SK-N-SH (cell line): ENCODE measurements at regions of chr6 and their contacts with region 1.

Region 1: GRCh38 chr6:88870717-88871330 is 92.6 kb downstream of the RNGTT start:
- DNase-seq: peak; percentile 29
- H3K4me3 ChIP-seq: no peak overlapping the region
- H3K27ac ChIP-seq: no peak overlapping the region
- H3K4me1 ChIP-seq: peaks cover 0 to 21% of the 10 kb centered on the region in 2 experiments; a peak in 2 of 4 replicates
- H3K27me3 ChIP-seq: no peaks in the 10 kb centered on the region
- CTCF ChIP-seq: peak; percentile 79
- EP300 ChIP-seq: no peak
- RAD21 ChIP-seq: peak; percentile 89

Region 2: DNA sequence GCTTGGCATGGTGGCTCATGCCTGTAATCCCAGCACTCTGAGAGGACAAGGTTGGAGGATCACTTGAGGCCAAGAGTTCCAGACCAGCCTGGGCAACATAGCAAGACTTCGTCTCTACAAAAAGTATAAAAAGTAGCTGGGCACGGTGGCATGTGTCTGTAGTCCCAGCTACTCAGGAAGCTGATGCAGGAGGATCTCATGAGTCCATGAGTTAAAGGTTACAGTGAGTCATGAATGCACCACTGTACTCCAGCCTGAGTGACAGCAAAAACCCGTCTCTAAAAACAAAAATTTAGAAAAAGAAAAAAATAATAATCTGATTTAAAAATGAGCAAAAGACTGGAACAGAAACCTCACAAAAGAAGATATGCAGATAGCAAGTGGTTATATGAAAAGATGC is 187.1 kb before region 1 on chr6:
- CTCF ChIA-PET with region 1: no interaction called
- POLR2A ChIA-PET with region 1: no interaction called
- DNase-seq: no peak
- H3K4me3 ChIP-seq: no peak overlapping the region
- H3K27ac ChIP-seq: no peak overlapping the region
- H3K4me1 ChIP-seq: no peaks in the 10 kb centered on the region
- H3K27me3 ChIP-seq: no peaks in the 10 kb centered on the region
- CTCF ChIP-seq: no peak
- EP300 ChIP-seq: no peak
- RAD21 ChIP-seq: no peak

Region 3: GRCh38 chr6:88855541-88856147 is 15.2 kb before region 1 on chr6:
- CTCF ChIA-PET with region 1: interaction called, 43 read pairs
- POLR2A ChIA-PET with region 1: no interaction called
- DNase-seq: no peak
- H3K4me3 ChIP-seq: no peak overlapping the region
- H3K27ac ChIP-seq: peak overlapping the region; percentile 11 to 47; a peak in 2 of 4 replicates
- H3K4me1 ChIP-seq: peaks cover 5 to 10% of the 10 kb centered on the region in 2 experiments; a peak in 3 of 4 replicates
- H3K27me3 ChIP-seq: no peaks in the 10 kb centered on the region
- CTCF ChIP-seq: no peak
- EP300 ChIP-seq: no peak
- RAD21 ChIP-seq: no peak

Region 4: GRCh38 chr6:88881451-88881850 is 10.6 kb after region 1 on chr6:
- CTCF ChIA-PET with region 1: interaction called, 16 read pairs
- POLR2A ChIA-PET with region 1: no interaction called
- DNase-seq: no peak
- H3K4me3 ChIP-seq: no peak overlapping the region
- H3K27ac ChIP-seq: no peak overlapping the region
- H3K4me1 ChIP-seq: no peaks in the 10 kb centered on the region; a peak in 1 of 4 replicates
- H3K27me3 ChIP-seq: no peaks in the 10 kb centered on the region
- CTCF ChIP-seq: no peak
- EP300 ChIP-seq: no peak
- RAD21 ChIP-seq: no peak